PC-9 (cell line): ENCODE measurements at regions of chr12 and their contacts with region 1.

Region 1: DNA sequence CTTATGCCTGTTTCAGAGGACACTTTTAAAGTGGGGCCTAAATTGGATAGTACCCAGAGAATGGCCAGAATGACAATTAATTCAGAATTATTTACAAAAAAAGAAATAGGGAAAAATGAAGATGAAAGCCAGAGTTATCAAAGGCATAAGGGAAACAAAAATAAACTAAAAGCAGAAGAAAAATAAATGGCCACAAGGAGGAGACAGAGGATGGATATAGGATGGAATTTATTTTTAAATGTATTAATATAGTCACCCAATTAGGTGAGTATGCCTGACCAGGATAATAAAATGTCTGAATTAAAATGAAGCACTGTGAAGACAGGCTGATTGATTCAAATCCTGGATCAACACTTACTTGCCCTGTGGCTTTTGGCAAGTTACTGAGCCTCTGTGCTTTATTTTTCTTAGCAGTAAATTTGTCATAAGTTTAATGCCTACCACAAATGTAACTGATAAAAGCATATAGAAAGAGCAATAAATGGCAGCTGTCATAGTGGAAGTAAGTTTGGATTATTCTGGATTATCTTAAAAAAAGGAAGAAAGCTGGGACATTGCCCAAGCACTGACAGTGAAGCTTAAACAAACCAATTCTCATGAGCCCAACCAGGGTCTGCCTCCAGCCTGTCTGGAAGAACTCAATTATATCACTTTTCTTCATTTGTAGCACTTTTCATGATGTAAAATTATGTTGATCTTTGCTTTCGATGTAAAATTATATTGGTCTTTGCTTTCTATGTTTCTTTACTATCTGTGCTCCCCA is 3.5 kb downstream of the CLEC9A start:
- DNase-seq: no peak
- H3K4me3 ChIP-seq: no peak overlapping the region
- H3K27ac ChIP-seq: no peak overlapping the region
- H3K4me1 ChIP-seq: no peaks in the 10 kb centered on the region
- H3K27me3 ChIP-seq: no peaks in the 10 kb centered on the region
- CTCF ChIP-seq: peak; percentile 80

Region 2: DNA sequence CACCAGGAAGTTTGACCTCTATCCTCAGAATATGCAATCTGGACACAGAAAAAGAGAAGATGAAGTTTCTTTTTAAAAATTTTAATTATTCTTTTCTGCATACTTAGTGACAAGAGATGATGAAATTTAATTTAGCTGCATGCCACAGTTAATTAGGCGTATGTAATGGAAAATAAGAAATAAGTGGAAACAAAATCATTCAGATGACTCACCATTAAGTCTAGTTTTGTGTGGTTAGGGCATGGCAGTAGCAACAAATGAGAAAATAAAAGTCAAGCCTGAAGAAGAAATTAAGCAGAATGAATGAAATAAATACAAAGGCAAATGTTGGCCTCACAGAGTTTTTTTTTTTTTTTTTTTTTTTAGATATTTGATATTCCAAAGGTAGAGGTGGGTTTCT is 242.8 kb after region 1 on chr12:
- CTCF ChIA-PET with region 1: no interaction called
- POLR2A ChIA-PET with region 1: no interaction called
- intact Hi-C with region 1: no loop called
- DNase-seq: no peak
- H3K4me3 ChIP-seq: no peak overlapping the region
- H3K27ac ChIP-seq: no peak overlapping the region
- H3K4me1 ChIP-seq: 0 out of 2 replicates have a peak, but pooled peaks cover 3% of the 10 kb centered on the region
- H3K27me3 ChIP-seq: no peaks in the 10 kb centered on the region
- CTCF ChIP-seq: no peak

Region 3: DNA sequence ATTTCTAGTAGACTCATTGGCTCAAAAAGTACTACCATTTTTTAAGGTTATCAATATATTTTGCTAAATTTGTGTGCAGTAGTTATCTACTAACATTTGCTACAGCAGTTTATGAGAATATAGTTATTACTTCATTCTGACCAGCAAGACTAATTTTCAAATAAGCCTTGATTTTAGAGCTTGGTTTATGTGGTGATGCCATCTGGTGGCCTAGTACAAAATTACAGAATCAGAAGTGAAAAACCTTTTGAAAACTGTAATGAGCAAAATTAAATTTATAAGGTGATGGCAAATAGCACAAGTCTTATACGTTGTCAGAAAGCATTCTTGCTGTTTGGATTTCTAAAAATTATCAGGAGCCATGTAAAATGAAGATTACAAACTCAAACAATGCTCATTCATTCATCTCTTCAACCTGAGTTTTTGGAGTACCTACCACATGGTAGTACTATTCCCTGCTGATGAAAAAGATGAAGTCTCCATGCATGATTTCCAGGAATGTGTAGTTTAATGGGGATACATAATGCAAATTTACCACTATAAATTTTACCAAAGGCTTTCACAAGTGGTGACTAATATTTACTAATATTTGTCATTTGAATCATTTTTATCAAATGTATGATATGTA is 528.5 kb after region 1 on chr12:
- CTCF ChIA-PET with region 1: no interaction called
- POLR2A ChIA-PET with region 1: no interaction called
- intact Hi-C with region 1: loop called (anchors 1 kb)
- DNase-seq: peak in 1 of 2 experiments; percentile 28
- H3K4me3 ChIP-seq: no peak overlapping the region
- H3K27ac ChIP-seq: no peak overlapping the region
- H3K4me1 ChIP-seq: no peaks in the 10 kb centered on the region
- H3K27me3 ChIP-seq: no peaks in the 10 kb centered on the region
- CTCF ChIP-seq: peak; percentile 87